ENCODE measurements at regions of chr17 and their contacts with region 1.

Region 1: GRCh38 chr17:46851029-46851741 is at the start of gene WNT9B:
- DNase-seq: no peak
- ATAC-seq: peak; percentile 36
- H3K4me3 ChIP-seq: peak within 1 kb of the TSS; percentile 35
- H3K27ac ChIP-seq: no peak within 1 kb of the TSS
- H3K4me1 ChIP-seq: no peaks in the 10 kb centered on the region; the same call in 1 of the 2 replicates
- H3K27me3 ChIP-seq: peaks cover 82% of the 10 kb centered on the region
- CTCF ChIP-seq: 0 out of 2 replicates have a peak, but pooled peaks have one; percentile 2
- POLR2A ChIP-seq: no peak
- RAD21 ChIP-seq: no peak
- total RNA-seq, gene WNT9B: not detected in 2 replicates

Region 2: DNA sequence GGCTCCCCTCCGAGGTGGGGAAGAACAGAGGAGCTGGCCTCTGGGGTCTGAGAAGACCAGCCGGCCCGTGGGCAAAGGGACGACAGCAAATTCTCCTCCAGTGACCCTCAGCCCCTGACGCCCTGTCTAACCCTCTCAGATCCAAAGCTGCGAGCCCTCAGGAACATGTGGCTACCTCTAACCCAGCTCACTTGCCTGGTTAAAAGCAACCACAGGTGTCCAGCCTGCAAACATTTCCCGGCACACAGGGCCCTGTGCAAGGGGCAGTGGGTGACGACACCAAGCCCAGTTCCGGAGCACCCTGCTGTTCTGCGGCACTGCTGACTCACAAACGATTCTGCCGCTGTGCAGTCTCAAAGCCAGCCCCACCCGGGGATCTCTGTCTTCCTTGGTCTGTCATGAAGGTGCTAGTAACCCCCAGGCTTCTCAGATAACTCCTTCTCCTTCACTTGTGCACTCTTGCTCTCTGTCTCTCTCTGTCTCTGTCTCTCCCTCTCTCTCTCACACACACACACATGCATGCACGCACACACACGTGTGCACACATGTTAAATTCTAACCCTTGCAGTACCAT is 55.7 kb before region 1 on chr17:
- CTCF ChIA-PET with region 1: no interaction called
- POLR2A ChIA-PET with region 1: no interaction called
- dilution Hi-C with region 1: no loop called
- in situ Hi-C with region 1: no loop called
- intact Hi-C with region 1: loop called (anchors 10 kb)
- DNase-seq: no peak
- ATAC-seq: no peak
- H3K4me3 ChIP-seq: no peak overlapping the region
- H3K27ac ChIP-seq: no peak overlapping the region
- H3K4me1 ChIP-seq: no peaks in the 10 kb centered on the region
- H3K27me3 ChIP-seq: peaks cover 60% of the 10 kb centered on the region
- CTCF ChIP-seq: no peak
- POLR2A ChIP-seq: no peak
- RAD21 ChIP-seq: no peak

Region 3: GRCh38 chr17:46922804-46923635 is 71.8 kb after region 1 on chr17 and contains the start of gene GOSR2:
- CTCF ChIA-PET with region 1: no interaction called
- POLR2A ChIA-PET with region 1: no interaction called
- dilution Hi-C with region 1: no loop called
- in situ Hi-C with region 1: no loop called
- intact Hi-C with region 1: loop called (anchors 5 kb)
- DNase-seq: peak; percentile 86
- ATAC-seq: peak; percentile 98
- H3K4me3 ChIP-seq: peak within 1 kb of the TSS; percentile 84
- H3K27ac ChIP-seq: peak within 1 kb of the TSS; percentile 92
- H3K4me1 ChIP-seq: no peaks in the 10 kb centered on the region; the same call in 1 of the 2 replicates
- H3K27me3 ChIP-seq: no peaks in the 10 kb centered on the region
- CTCF ChIP-seq: no peak
- POLR2A ChIP-seq: peak; percentile 98
- RAD21 ChIP-seq: no peak
- total RNA-seq, gene GOSR2: 65.8 and 75.6 TPM in 2 replicates

Region 4: GRCh38 chr17:47009759-47010594 is 158.8 kb after region 1 on chr17:
- CTCF ChIA-PET with region 1: no interaction called
- POLR2A ChIA-PET with region 1: no interaction called
- dilution Hi-C with region 1: no loop called
- in situ Hi-C with region 1: loop called (anchors 25 kb)
- intact Hi-C with region 1: no loop called
- DNase-seq: no peak
- ATAC-seq: no peak
- H3K4me3 ChIP-seq: no peak overlapping the region
- H3K27ac ChIP-seq: no peak overlapping the region
- H3K4me1 ChIP-seq: peaks cover 5% of the 10 kb centered on the region; the same call in 1 of the 2 replicates
- H3K27me3 ChIP-seq: no peaks in the 10 kb centered on the region
- CTCF ChIP-seq: no peak
- POLR2A ChIP-seq: no peak
- RAD21 ChIP-seq: no peak

Measured in IMR-90 (cell line).